CD8-positive, alpha-beta T cell (primary cell): ENCODE measurements at regions of chr11 and their contacts with region 1.

Region 1: DNA sequence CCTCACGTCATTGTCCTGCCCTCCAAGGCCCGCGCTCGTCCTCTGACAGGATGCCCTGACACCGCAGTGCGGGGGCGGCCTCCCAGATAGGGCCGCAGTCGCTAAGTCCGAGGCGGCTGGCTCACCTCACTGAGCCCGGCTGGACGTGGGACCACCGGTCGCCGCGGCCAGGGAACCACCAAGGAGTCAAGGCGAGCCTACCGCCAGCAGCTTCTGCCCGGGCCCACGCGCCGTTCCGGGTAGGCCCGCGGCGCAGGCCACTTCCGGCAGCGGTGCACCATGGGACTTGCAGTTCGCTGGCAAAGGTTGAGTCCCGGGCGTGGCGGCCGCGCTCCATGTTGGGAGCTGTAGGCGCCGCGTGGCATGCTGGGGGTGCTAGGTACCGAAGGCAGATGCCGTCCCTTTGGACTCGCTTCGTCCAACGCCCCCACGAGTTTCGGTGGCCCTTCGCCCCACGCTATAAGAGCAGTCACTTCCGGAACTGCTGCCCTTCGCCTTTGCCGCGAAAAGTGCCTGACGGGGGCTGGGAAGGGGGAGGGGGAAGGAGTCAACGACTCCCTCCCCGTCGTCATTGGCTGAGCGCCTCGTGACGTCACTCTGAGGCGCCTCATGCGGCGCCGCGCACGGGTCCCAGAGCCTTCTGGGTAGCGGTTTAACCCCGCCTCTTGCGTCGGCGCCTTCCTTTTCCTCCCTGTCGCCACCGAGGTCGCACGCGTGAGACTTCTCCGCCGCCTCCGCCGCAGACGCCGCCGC is at the start of gene RPLP2:
- DNase-seq: peak; percentile 93 to 99 (median 98)
- ATAC-seq: peak; percentile 80
- H3K4me3 ChIP-seq: peak within 1 kb of the TSS; percentile 85 to 96
- H3K4me3 Mint-ChIP-seq: peak within 1 kb of the TSS; percentile 94
- H3K27ac ChIP-seq: peak within 1 kb of the TSS; percentile 80 to 100
- H3K27ac Mint-ChIP-seq: peak within 1 kb of the TSS; percentile 97
- H3K4me1 ChIP-seq: peaks cover 37% of the 10 kb centered on the region
- H3K4me1 Mint-ChIP-seq: peaks cover 25% of the 10 kb centered on the region
- H3K27me3 ChIP-seq: no peaks in the 10 kb centered on the region
- H3K27me3 Mint-ChIP-seq: no peaks in the 10 kb centered on the region
- CTCF ChIP-seq: no peak
- total RNA-seq, gene RPLP2: 5,702 to 5,720 TPM

Region 2: GRCh38 chr11:536841-537621 is 272.4 kb before region 1 on chr11 and contains the start of gene LRRC56:
- CTCF ChIA-PET with region 1: no interaction called
- POLR2A ChIA-PET with region 1: no interaction called
- intact Hi-C with region 1: no loop called
- DNase-seq: peak; percentile 87 to 98 (median 91)
- ATAC-seq: peak; percentile 37
- H3K4me3 ChIP-seq: peak within 1 kb of the TSS; percentile 52 to 59
- H3K4me3 Mint-ChIP-seq: peak within 1 kb of the TSS; percentile 93
- H3K27ac ChIP-seq: peak within 1 kb of the TSS; percentile 73 to 89
- H3K27ac Mint-ChIP-seq: peak within 1 kb of the TSS; percentile 95
- H3K4me1 ChIP-seq: peaks cover 28% of the 10 kb centered on the region
- H3K4me1 Mint-ChIP-seq: peaks cover 24% of the 10 kb centered on the region
- H3K27me3 ChIP-seq: no peaks in the 10 kb centered on the region
- H3K27me3 Mint-ChIP-seq: no peaks in the 10 kb centered on the region
- CTCF ChIP-seq: no peak
- total RNA-seq, gene LRRC56: 3.2 TPM

Region 3: DNA sequence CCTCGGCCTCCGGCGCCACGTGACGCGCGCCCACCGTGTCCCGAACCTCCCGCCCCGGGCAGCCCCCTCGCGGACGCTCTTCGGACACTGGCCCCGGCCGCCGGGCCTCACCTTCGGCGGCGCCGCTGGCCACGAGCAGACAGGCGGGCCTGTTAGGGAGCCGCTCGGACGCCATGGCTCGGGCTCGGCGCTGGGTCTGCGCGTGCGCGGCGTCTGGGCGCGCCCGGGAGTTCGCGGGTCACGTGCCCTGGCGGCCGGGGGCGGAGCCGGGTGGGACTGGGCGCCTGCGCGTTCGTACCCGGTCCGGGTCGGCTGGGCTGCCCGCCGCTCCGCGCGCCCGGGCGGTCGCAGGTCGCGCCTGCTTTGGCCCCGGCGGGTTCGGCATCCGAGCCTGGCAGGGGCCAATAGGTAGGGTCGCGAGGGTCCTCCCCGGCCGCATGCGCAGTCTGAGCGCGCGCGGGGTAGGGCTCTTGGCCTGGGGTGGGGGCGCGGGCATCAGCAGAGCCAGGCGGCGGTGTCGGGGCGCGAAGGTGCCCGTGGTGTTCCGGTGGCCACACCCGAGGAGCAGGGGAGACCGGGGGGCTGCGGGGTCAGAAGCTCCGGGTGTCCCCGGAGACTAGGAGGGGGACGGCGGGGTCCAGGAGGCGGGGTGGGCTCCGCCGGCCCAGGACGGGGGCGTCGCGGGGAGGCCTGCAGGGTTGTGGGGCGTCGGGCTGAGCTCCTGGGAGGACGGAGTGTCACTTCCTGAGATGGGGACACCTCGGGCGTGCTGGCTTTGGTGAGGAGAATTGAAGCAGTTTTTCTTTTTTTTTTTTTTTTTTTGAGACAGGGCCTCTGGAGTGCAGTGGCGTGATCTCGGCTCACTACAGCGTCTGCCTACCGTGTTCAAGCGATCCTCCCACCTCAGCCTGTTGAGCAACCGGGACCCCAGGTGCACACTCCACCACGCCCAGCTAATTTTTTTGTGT is 31.9 kb before region 1 on chr11 and contains the start of gene GATD1:
- CTCF ChIA-PET with region 1: no interaction called
- POLR2A ChIA-PET with region 1: interaction called, 3 read pairs
- intact Hi-C with region 1: loop called in 1 of 2 experiments (anchors 1 kb)
- DNase-seq: peak; percentile 87 to 96 (median 94)
- ATAC-seq: peak; percentile 88
- H3K4me3 ChIP-seq: peak within 1 kb of the TSS; percentile 60 to 84
- H3K4me3 Mint-ChIP-seq: peak within 1 kb of the TSS; percentile 84
- H3K27ac ChIP-seq: peak within 1 kb of the TSS; percentile 48 to 64
- H3K27ac Mint-ChIP-seq: peak within 1 kb of the TSS; percentile 72
- H3K4me1 ChIP-seq: peaks cover 24% of the 10 kb centered on the region
- H3K4me1 Mint-ChIP-seq: peaks cover 26% of the 10 kb centered on the region
- H3K27me3 ChIP-seq: no peaks in the 10 kb centered on the region
- H3K27me3 Mint-ChIP-seq: no peaks in the 10 kb centered on the region
- CTCF ChIP-seq: no peak
- total RNA-seq, gene GATD1: 21.2 to 22.6 TPM

Region 4: DNA sequence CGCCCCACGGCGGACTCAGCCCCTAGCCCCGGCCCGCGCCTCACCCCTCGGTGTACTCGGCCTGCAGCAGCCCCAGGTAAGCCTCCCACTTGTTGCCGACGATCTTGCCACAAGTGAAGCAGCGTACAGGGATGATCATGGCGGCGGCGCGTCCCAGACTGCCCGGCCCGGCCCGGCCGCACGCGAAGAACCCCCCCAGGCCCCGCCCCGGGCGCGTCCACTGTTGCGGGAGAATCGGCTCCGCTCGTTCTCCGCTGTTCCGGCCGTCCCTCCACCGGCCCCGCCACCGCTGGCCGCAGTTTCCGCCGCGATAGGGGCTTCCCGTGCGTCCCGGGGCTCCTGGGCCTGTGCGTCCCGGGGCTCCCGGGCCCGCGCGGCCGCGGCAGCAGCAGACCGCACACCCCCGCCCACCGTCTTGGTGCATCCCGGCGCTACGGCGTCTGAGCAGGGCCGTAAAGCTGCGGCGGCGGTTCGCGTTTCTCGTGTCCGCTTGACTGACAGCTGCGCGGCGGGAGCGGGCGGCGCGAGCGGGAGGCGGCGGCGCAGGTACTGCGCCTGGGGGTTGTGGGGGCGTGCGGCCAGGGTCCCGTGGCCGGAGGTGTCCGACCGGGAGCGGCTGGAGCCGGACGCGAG is 33.0 kb after region 1 on chr11 and contains the starts of genes POLR2L and TSPAN4:
- CTCF ChIA-PET with region 1: no interaction called
- POLR2A ChIA-PET with region 1: interaction called, 9 read pairs
- intact Hi-C with region 1: loop called (anchors 1 kb)
- DNase-seq: peak; percentile 77 to 94 (median 88)
- ATAC-seq: peak; percentile 83
- H3K4me3 ChIP-seq: peak within 1 kb of the TSS; percentile 90 to 92
- H3K4me3 Mint-ChIP-seq: peak within 1 kb of the TSS; percentile 84
- H3K27ac ChIP-seq: peak within 1 kb of the TSS; percentile 50 to 78
- H3K27ac Mint-ChIP-seq: peak within 1 kb of the TSS; percentile 45
- H3K4me1 ChIP-seq: peaks cover 32% of the 10 kb centered on the region
- H3K4me1 Mint-ChIP-seq: peaks cover 25% of the 10 kb centered on the region
- H3K27me3 ChIP-seq: peaks cover 0 to 7% of the 10 kb centered on the region in 2 experiments
- H3K27me3 Mint-ChIP-seq: peaks cover 2% of the 10 kb centered on the region
- CTCF ChIP-seq: no peak
- total RNA-seq, gene POLR2L: 22.8 to 26.2 TPM
- total RNA-seq, gene TSPAN4: 2.1 to 2.2 TPM

Region 5: DNA sequence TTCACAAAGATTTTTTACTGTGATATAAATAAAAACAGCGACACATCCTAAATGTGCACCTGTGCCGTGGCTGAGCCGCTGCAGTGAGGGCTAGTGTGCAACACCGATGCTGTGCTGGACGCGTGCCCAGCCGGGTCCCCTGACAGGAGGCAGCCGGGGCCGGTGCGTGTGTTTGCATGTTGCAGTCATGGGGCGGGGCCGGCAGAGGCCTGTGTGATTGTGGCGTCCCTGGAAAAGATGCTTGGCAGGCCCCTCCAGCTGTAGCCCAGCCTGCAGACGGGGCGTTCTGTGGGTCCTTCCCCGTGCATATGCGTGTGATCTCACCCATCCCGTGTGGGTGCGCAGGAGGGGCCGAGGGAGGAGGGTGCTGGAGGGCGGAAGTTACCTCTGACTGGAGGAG is 196.5 kb after region 1 on chr11:
- CTCF ChIA-PET with region 1: no interaction called
- POLR2A ChIA-PET with region 1: no interaction called
- intact Hi-C with region 1: no loop called
- DNase-seq: no peak
- ATAC-seq: no peak
- H3K4me3 ChIP-seq: no peak overlapping the region
- H3K4me3 Mint-ChIP-seq: no peak overlapping the region
- H3K27ac ChIP-seq: no peak overlapping the region
- H3K27ac Mint-ChIP-seq: no peak overlapping the region
- H3K4me1 ChIP-seq: no peaks in the 10 kb centered on the region
- H3K4me1 Mint-ChIP-seq: no peaks in the 10 kb centered on the region
- H3K27me3 ChIP-seq: no peaks in the 10 kb centered on the region
- H3K27me3 Mint-ChIP-seq: no peaks in the 10 kb centered on the region
- CTCF ChIP-seq: no peak